Activated CD4-positive, alpha-beta T cell treated with anti-CD3 and anti-CD28 coated beads, Interleukin-2, amount 10 ng/mL, durations not matched to agents 24 days and 14 days (primary cell): ENCODE measurements at regions of chr19 and their contacts with region 1.

Region 1: GRCh38 chr19:36850559-36851442 is at the start of gene ZNF345:
- DNase-seq: peak; percentile 96
- H3K4me3 Mint-ChIP-seq: no peak within 1 kb of the TSS
- H3K27ac Mint-ChIP-seq: no peak within 1 kb of the TSS
- H3K4me1 Mint-ChIP-seq: peaks cover 2% of the 10 kb centered on the region
- H3K27me3 Mint-ChIP-seq: no peaks in the 10 kb centered on the region
- total RNA-seq, gene ZNF345: 2.8 and 4.2 TPM in 2 replicates

Region 2: DNA sequence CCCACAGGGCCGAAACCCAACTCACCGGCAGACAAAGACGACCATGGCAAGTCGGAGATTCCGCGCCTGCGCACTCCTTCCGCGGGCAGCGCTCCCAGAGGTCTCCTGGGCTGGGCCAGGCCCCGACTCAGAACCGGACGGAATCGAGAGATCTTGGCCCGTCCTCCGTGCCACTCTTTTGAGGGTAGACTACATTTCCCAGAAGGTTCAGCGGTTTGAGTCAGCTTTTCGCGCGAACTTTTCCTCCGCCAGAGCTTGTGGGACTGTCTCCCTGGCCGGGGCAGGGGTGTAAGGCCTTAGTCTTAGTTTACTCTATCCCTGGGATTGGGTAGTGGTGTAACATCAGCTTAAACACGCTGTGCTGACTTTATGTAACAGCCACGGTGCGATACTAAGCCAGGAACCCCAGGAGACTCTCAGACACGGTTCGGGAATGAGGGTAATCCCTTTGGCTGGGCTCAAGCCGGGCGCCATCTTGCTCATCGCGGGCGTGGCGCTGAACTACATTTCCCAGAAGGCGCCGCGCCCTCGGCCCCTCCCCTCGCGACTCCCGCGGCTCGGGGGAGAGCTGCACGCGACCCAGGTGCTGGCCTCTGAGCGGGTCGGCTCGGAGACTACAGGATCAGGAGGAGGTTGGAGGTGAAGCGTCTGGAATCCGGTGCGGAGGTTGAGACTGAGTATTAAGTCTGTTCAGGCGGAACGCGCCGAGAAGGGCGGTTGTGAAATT is 322.4 kb before region 1 on chr19 and contains the start of gene ZNF260:
- intact Hi-C with region 1: loop called (anchors 1 kb)
- DNase-seq: peak; percentile 97
- H3K4me3 Mint-ChIP-seq: peak within 1 kb of the TSS; percentile 96
- H3K27ac Mint-ChIP-seq: peak within 1 kb of the TSS; percentile 95
- H3K4me1 Mint-ChIP-seq: peaks cover 17% of the 10 kb centered on the region
- H3K27me3 Mint-ChIP-seq: no peaks in the 10 kb centered on the region
- total RNA-seq, gene ZNF260: 6.7 and 8.0 TPM in 2 replicates

Region 3: GRCh38 chr19:36665832-36666231 is 185.0 kb before region 1 on chr19:
- intact Hi-C with region 1: loop called (anchors 2 kb)
- DNase-seq: no peak
- H3K4me3 Mint-ChIP-seq: peak overlapping the region; percentile 98
- H3K27ac Mint-ChIP-seq: peak overlapping the region; percentile 76
- H3K4me1 Mint-ChIP-seq: peaks cover 23% of the 10 kb centered on the region
- H3K27me3 Mint-ChIP-seq: no peaks in the 10 kb centered on the region

Region 4: DNA sequence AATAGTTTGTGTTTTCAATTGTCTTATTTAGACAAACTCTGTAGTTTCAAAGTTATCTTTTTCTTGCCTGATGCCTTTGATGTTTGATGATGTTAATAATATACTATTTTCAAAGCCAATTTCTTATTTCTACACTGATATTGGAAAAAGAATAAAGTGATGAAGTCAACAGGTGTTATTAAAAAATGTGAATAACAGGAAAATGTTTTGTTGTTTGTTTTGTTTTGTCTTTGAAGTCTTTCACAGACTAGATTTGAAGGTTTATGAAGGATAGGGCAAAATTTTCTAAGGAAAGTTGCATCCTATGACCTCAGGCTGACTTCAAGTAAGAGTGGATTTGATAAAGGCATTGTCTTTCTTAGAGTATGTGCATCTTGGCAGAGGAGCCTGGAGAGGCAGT is 43.8 kb before region 1 on chr19:
- intact Hi-C with region 1: no loop called
- DNase-seq: no peak
- H3K4me3 Mint-ChIP-seq: no peak overlapping the region
- H3K27ac Mint-ChIP-seq: no peak overlapping the region
- H3K4me1 Mint-ChIP-seq: no peaks in the 10 kb centered on the region
- H3K27me3 Mint-ChIP-seq: no peaks in the 10 kb centered on the region

Region 5: DNA sequence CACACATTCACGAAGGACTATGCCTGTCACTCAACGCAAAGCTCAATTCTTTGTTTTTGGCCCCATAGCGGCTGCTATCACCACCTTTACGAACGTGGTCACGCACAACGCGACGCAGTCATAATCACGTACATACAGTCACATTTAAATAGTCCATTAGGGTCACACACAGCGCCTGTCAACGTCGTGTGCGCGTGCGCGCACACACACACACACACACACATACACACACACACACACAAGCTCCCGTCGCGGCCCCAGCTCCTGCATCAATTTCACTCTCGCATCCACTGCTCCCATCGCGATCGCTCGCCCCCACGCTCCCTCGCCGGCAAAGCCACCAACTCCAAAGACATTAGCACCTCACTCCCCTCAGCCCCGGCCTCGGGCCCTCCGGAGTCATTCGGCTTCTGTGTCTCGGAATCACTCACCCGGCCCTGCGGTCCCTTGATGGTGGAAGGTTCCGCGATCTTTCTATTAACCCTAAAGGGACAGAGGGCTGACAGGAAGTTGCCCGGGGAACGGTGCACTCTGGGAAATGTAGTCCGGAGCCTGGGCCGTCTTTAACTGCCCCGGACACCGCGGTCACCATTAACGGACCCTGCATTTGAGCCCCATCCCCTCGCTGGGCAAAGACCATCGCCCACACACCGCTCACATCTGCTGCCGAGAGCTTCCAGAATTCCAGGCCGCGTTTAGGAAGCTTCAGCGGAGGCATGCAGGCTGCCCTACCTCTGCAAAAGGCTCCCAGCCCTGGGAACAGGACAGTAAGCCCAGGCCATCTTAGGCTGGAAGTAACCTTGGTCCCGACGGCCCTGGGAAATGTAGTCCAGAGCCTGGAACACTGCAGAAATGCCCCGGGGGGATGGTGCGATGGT is 12.7 kb before region 1 on chr19 and contains the start of gene ZNF790:
- intact Hi-C with region 1: loop called (anchors 1 kb)
- DNase-seq: peak; percentile 94
- H3K4me3 Mint-ChIP-seq: no peak within 1 kb of the TSS
- H3K27ac Mint-ChIP-seq: peak within 1 kb of the TSS; percentile 49
- H3K4me1 Mint-ChIP-seq: peaks cover 4% of the 10 kb centered on the region
- H3K27me3 Mint-ChIP-seq: no peaks in the 10 kb centered on the region
- total RNA-seq, gene ZNF790: 5.1 and 6.7 TPM in 2 replicates

Region 6: DNA sequence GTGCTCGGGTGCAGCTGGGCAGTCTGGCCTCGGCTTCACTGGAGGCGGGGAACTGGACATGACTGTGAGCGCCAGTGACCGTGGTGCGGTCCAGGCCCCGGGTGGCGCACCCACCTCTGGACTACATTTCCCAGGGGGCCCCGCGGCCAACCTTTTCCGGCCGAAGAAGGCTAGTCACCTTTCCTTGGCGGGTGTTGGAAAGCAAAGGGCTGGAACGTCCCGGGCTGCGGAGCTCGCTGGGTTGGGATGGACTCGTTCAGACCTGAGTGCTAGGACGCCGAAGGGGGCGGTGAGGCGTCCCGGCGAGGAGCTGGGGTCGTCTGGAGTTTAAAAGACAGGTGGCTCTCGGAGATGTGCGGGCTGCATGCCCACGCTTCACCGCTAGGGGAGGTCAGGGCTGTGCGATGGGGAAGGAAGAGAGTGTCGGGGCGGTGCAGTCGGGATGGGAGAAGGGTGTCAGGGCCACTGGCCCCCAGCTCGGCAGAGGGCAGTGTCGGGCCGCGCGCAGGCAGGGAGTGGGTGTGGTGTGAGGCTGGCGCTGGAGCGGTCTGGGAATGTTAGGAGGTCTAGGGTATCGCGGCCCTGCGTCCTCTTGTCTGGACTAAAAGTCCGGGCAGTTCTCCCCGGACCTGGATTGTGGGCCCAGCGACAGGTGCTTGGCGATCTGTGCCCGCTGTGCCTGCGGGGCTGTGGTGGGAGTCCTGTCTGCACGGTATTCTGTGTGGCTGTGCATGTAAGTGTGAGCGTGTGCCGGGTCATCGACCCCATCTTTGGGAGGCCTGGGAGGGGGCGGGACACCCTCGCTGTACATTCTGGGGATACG is 122.4 kb after region 1 on chr19:
- intact Hi-C with region 1: loop called (anchors 5 kb)
- DNase-seq: peak; percentile 92
- H3K4me3 Mint-ChIP-seq: peak overlapping the region; percentile 99
- H3K27ac Mint-ChIP-seq: peak overlapping the region; percentile 92
- H3K4me1 Mint-ChIP-seq: peaks cover 12% of the 10 kb centered on the region
- H3K27me3 Mint-ChIP-seq: no peaks in the 10 kb centered on the region